Stomach (tissue), 19 donors: ENCODE measurements at regions of chr4 and their contacts with region 1.

Region 1: GRCh38 chr4:38319456-38320342 is 344.3 kb upstream of the KLF3 start:
- DNase-seq: peak; percentile 96 to 97
- H3K4me3 ChIP-seq: peak overlapping the region; percentile 25 to 34 (median 33)
- H3K27ac ChIP-seq: peak overlapping the region; percentile 81 to 95 (median 90)
- H3K4me1 ChIP-seq: peaks cover 15 to 28% (median 26%) of the 10 kb centered on the region in 4 donors
- H3K27me3 ChIP-seq: no peaks in the 10 kb centered on the region
- CTCF ChIP-seq: peak in 6 of 7 experiments; percentile 93 to 100 (median 98)
- EP300 ChIP-seq: no peak
- POLR2A ChIP-seq: no peak

Region 2: GRCh38 chr4:38190717-38191178 is 129.0 kb before region 1 on chr4:
- intact Hi-C with region 1: loop called (anchors 10 kb)
- DNase-seq: peak in 1 of 2 donors; percentile 69
- H3K4me3 ChIP-seq: no peak overlapping the region
- H3K27ac ChIP-seq: peak overlapping the region in 4 of 5 donors; percentile 56 to 80 (median 70)
- H3K4me1 ChIP-seq: peaks cover 6 to 37% (median 19%) of the 10 kb centered on the region in 4 donors
- H3K27me3 ChIP-seq: no peaks in the 10 kb centered on the region
- CTCF ChIP-seq: no peak
- EP300 ChIP-seq: no peak
- POLR2A ChIP-seq: no peak

Region 3: GRCh38 chr4:38647101-38647819 is 327.6 kb after region 1 on chr4:
- intact Hi-C with region 1: no loop called
- DNase-seq: no peak
- H3K4me3 ChIP-seq: no peak overlapping the region
- H3K27ac ChIP-seq: no peak overlapping the region
- H3K4me1 ChIP-seq: peaks cover 0 to 9% (median 0%) of the 10 kb centered on the region in 4 donors
- H3K27me3 ChIP-seq: no peaks in the 10 kb centered on the region
- CTCF ChIP-seq: no peak
- EP300 ChIP-seq: no peak
- POLR2A ChIP-seq: no peak

Region 4: GRCh38 chr4:38675146-38676121 is 355.7 kb after region 1 on chr4:
- intact Hi-C with region 1: loop called (anchors 5 kb)
- DNase-seq: peak; percentile 86 to 94
- H3K4me3 ChIP-seq: peak overlapping the region in 1 of 4 donors; percentile 2
- H3K27ac ChIP-seq: peak overlapping the region; percentile 24 to 100 (median 97)
- H3K4me1 ChIP-seq: peaks cover 72 to 100% (median 90%) of the 10 kb centered on the region in 4 donors
- H3K27me3 ChIP-seq: no peaks in the 10 kb centered on the region
- CTCF ChIP-seq: peak in 6 of 7 experiments; percentile 35 to 91 (median 88)
- EP300 ChIP-seq: no peak
- POLR2A ChIP-seq: no peak